ENCODE measurements at regions of chr11 and their contacts with region 1.

Region 1: DNA sequence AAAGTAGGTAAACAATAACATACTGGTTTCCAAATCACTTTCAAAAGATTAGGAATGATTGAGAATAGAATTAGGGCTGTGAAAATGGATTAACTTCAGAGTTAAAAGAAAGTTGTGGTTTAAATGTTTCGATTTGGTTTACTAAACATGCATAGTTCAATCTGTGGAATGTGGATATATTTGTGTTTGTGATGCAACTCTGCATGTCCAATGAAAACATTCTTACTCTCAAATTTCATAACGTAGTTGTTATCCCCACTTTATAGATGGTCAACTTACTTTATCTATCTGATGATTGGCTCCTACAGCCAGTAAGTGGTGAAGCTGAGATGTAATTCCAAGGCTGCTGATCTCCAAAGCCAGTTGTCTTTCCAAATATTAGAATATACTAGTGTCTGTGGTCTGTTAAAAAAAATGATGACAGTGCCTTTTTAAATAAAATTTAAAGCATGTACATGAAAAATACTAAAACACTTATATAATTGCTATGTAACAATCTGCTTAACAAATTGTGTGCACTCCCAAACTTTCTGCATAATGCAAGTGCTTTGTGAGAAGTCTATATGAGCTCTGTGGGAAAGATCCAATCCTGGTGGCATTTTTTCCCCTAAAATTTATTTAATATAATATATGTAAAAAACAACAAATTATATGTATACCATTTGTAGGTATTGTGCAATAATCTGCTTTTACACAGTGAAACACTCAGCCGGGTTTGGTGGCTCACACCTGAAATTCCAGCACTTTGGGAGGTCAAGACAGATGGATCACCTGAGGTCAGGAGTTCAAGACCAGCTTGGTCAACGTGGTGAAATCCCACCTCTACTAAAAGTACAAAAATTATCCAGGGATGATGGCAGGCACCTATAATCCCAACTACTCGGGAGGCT is 9.7 kb upstream of the SIK3 start:
- DNase-seq: no peak
- H3K4me3 ChIP-seq: no peak overlapping the region
- H3K27ac ChIP-seq: no peak overlapping the region
- H3K4me1 ChIP-seq: peaks cover 7% of the 10 kb centered on the region
- H3K27me3 ChIP-seq: no peaks in the 10 kb centered on the region
- CTCF ChIP-seq: no peak

Region 2: DNA sequence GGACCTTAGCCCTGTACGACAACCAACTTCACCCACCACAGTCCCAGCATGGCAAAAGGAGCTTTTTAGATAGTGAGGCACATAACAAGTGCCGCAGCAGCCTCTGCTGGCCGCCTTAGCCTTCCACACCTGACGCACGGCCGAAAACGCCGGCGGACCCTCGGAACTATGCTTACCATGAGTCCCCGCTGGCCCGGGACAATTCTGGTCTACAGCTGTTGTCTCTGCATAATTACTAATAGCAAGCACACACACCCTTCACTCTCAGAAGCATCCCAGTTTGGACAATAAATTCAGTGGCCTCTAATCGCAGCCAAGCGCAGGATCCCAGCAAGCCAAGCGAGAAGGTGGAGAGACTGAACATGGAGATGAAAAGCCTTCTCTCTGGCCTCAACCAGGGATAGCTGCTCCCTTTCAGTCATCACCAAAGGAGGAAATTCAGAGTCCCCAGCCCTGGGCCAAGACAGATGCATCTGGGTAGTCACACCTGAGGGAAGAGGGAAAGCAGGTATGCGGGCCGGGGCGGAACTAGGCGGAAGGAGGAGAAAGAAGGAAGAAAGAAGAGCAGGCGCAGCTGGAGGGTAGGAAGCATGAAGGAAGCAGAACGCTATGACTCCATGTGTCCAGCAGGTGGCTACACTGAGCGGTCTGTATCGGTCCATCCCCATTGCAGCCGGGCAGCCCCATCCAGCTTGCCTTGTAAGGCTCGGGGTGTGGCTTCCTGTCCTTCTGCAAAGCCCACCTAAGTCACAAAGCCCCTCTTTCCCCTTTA is 375.5 kb before region 1 on chr11:
- CTCF ChIA-PET with region 1: interaction called, 6 read pairs
- POLR2A ChIA-PET with region 1: no interaction called
- intact Hi-C with region 1: loop called (anchors 1 kb)
- DNase-seq: peak; percentile 83
- H3K4me3 ChIP-seq: no peak overlapping the region
- H3K27ac ChIP-seq: no peak overlapping the region
- H3K4me1 ChIP-seq: no peaks in the 10 kb centered on the region
- H3K27me3 ChIP-seq: peaks cover 7% of the 10 kb centered on the region
- CTCF ChIP-seq: peak; percentile 88

Region 3: GRCh38 chr11:116772443-116773202 is 335.3 kb before region 1 on chr11 and contains the start of gene BUD13:
- CTCF ChIA-PET with region 1: no interaction called
- POLR2A ChIA-PET with region 1: no interaction called
- intact Hi-C with region 1: loop called (anchors 5 kb)
- DNase-seq: peak; percentile 94
- H3K4me3 ChIP-seq: peak within 1 kb of the TSS; percentile 58
- H3K27ac ChIP-seq: peak within 1 kb of the TSS; percentile 88
- H3K4me1 ChIP-seq: peaks cover 20% of the 10 kb centered on the region
- H3K27me3 ChIP-seq: no peaks in the 10 kb centered on the region
- CTCF ChIP-seq: no peak
- total RNA-seq, gene BUD13: 38.7 and 39.4 TPM in 2 replicates

Region 4: GRCh38 chr11:116829525-116830183 is 278.3 kb before region 1 on chr11 and contains the start of gene APOC3:
- CTCF ChIA-PET with region 1: no interaction called
- POLR2A ChIA-PET with region 1: no interaction called
- intact Hi-C with region 1: no loop called
- DNase-seq: peak; percentile 30
- H3K4me3 ChIP-seq: no peak within 1 kb of the TSS
- H3K27ac ChIP-seq: no peak within 1 kb of the TSS
- H3K4me1 ChIP-seq: peaks cover 6% of the 10 kb centered on the region
- H3K27me3 ChIP-seq: no peaks in the 10 kb centered on the region
- CTCF ChIP-seq: no peak
- total RNA-seq, gene APOC3: not detected in 2 replicates

Region 5: DNA sequence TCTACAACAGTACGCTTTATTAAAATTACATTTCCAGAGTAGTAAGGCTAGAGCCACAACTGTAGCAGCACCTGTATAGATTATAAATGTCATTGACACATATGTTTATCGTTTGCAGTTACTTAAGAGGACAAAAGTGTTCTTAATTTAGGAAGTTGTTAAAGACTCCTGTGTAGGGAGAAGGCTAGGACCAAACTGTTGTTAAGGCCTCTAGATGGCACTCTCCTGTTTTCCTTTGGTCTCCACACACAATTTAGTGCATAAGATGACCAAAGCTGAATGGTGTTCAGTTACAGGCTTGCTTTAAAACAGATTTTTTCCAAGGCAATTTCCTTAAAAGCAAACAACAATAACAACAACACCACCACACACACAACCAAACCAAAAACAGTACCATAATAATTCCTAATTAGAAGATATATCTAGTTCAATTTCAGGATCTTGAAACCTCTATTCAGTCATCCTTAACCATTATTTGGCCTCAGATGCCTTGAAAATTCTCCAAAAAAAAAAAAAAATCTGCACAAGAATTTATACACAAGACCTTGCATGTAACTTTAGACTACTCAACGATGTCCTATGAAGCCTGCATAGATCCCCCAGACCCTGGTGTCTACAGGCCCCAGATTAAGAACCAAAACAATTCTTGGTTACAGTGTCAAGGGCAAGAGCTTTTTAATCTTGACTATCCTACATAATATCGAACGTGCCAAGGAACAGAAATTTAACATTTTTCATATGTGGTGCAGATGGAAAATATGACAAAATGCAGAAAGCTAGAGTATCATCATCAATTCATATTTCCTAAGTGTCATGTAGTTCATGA is 227.9 kb before region 1 on chr11:
- CTCF ChIA-PET with region 1: interaction called, 9 read pairs
- POLR2A ChIA-PET with region 1: no interaction called
- intact Hi-C with region 1: loop called (anchors 1 kb)
- DNase-seq: peak; percentile 84
- H3K4me3 ChIP-seq: no peak overlapping the region
- H3K27ac ChIP-seq: no peak overlapping the region
- H3K4me1 ChIP-seq: peaks cover 7% of the 10 kb centered on the region
- H3K27me3 ChIP-seq: no peaks in the 10 kb centered on the region
- CTCF ChIP-seq: peak; percentile 85

Region 6: GRCh38 chr11:117456027-117456720 is 348.2 kb after region 1 on chr11:
- CTCF ChIA-PET with region 1: no interaction called
- POLR2A ChIA-PET with region 1: no interaction called
- intact Hi-C with region 1: no loop called
- DNase-seq: no peak
- H3K4me3 ChIP-seq: no peak overlapping the region
- H3K27ac ChIP-seq: no peak overlapping the region
- H3K4me1 ChIP-seq: no peaks in the 10 kb centered on the region
- H3K27me3 ChIP-seq: peaks cover 9% of the 10 kb centered on the region
- CTCF ChIP-seq: no peak